ENCODE measurements at regions of chr12 and their contacts with region 1.

Region 1: DNA sequence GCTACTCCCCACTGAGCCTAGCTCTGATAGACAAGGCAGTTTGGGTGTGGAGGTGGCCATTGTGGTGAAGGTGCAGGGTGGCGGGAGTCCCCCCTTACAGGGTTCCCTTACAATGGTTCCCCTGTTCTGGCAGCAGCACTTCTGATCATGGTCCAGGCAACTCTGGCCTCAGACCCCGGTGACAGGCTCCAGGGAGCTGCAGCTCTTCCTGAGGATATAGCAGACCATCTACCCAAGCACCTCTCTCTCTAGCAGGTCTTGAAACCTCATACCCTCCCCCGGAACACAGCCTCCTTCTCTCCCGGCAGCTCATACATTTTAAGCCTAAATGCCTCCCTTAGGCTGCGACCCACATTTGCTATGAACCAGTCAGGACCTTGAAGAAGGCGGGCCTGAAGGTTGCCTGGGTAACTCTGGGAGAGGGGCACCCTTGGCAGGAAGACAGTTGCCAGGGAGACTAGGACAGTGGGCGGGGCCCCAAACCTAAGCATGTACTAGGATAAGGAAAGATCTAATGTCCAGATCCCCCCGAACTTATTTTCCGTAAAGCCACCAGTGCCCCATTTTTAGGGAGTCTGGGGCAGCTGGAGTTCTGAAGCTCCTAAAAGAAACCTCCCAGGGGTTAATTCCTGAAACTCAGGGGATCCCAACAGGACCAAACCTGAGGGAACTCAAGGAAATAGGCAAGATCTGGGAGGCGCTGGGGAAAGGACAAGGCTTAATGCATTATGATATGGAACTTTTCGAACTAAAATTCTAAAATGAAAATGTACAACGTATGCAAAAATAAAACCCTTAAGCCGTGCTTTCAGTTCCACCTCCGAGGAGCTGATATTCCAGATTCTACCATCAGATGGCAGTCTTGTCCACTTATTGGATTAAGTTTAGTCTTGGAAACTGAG is 4.5 kb upstream of the GDF11 start:
- DNase-seq: peak; percentile 97
- H3K4me3 ChIP-seq: peak overlapping the region; percentile 59
- H3K27ac ChIP-seq: peak overlapping the region; percentile 72
- H3K4me1 ChIP-seq: peaks cover 15% of the 10 kb centered on the region
- H3K27me3 ChIP-seq: no peaks in the 10 kb centered on the region
- CTCF ChIP-seq: peak; percentile 90

Region 2: GRCh38 chr12:55659486-55660385 is 78.6 kb before region 1 on chr12:
- CTCF ChIA-PET with region 1: interaction called, 3 read pairs
- POLR2A ChIA-PET with region 1: no interaction called
- intact Hi-C with region 1: loop called (anchors 1 kb)
- DNase-seq: peak; percentile 63
- H3K4me3 ChIP-seq: no peak overlapping the region
- H3K27ac ChIP-seq: no peak overlapping the region
- H3K4me1 ChIP-seq: no peaks in the 10 kb centered on the region
- H3K27me3 ChIP-seq: no peaks in the 10 kb centered on the region
- CTCF ChIP-seq: peak; percentile 63

Region 3: GRCh38 chr12:55797068-55797467 is 58.7 kb after region 1 on chr12:
- CTCF ChIA-PET with region 1: interaction called, 17 read pairs
- POLR2A ChIA-PET with region 1: no interaction called
- intact Hi-C with region 1: loop called (anchors 2 kb)
- DNase-seq: peak; percentile 68
- H3K4me3 ChIP-seq: no peak overlapping the region
- H3K27ac ChIP-seq: no peak overlapping the region
- H3K4me1 ChIP-seq: peaks cover 3% of the 10 kb centered on the region
- H3K27me3 ChIP-seq: no peaks in the 10 kb centered on the region
- CTCF ChIP-seq: peak; percentile 65

Region 4: GRCh38 chr12:55817346-55818139 is 79.2 kb after region 1 on chr12 and contains the starts of genes ORMDL2 and SARNP:
- CTCF ChIA-PET with region 1: interaction called, 13 read pairs
- POLR2A ChIA-PET with region 1: no interaction called
- intact Hi-C with region 1: loop called (anchors 5 kb)
- DNase-seq: peak; percentile 100
- H3K4me3 ChIP-seq: peak within 1 kb of the TSS; percentile 71
- H3K27ac ChIP-seq: peak within 1 kb of the TSS; percentile 75
- H3K4me1 ChIP-seq: peaks cover 17% of the 10 kb centered on the region
- H3K27me3 ChIP-seq: no peaks in the 10 kb centered on the region
- CTCF ChIP-seq: no peak
- total RNA-seq, gene ORMDL2: 32.3 and 35.4 TPM in 2 replicates
- total RNA-seq, gene SARNP: 104 and 115 TPM in 2 replicates

Region 5: GRCh38 chr12:55926738-55927587 is 188.6 kb after region 1 on chr12:
- CTCF ChIA-PET with region 1: interaction called, 3 read pairs
- POLR2A ChIA-PET with region 1: no interaction called
- intact Hi-C with region 1: loop called (anchors 2 kb)
- DNase-seq: peak; percentile 97
- H3K4me3 ChIP-seq: peak overlapping the region; percentile 91
- H3K27ac ChIP-seq: peak overlapping the region; percentile 95
- H3K4me1 ChIP-seq: peaks cover 32% of the 10 kb centered on the region
- H3K27me3 ChIP-seq: no peaks in the 10 kb centered on the region
- CTCF ChIP-seq: peak; percentile 96

Region 6: GRCh38 chr12:55937956-55938355 is 199.6 kb after region 1 on chr12:
- CTCF ChIA-PET with region 1: interaction called, 3 read pairs
- POLR2A ChIA-PET with region 1: no interaction called
- intact Hi-C with region 1: loop called (anchors 2 kb)
- DNase-seq: no peak
- H3K4me3 ChIP-seq: no peak overlapping the region
- H3K27ac ChIP-seq: no peak overlapping the region
- H3K4me1 ChIP-seq: peaks cover 15% of the 10 kb centered on the region
- H3K27me3 ChIP-seq: no peaks in the 10 kb centered on the region
- CTCF ChIP-seq: no peak

Region 7: DNA sequence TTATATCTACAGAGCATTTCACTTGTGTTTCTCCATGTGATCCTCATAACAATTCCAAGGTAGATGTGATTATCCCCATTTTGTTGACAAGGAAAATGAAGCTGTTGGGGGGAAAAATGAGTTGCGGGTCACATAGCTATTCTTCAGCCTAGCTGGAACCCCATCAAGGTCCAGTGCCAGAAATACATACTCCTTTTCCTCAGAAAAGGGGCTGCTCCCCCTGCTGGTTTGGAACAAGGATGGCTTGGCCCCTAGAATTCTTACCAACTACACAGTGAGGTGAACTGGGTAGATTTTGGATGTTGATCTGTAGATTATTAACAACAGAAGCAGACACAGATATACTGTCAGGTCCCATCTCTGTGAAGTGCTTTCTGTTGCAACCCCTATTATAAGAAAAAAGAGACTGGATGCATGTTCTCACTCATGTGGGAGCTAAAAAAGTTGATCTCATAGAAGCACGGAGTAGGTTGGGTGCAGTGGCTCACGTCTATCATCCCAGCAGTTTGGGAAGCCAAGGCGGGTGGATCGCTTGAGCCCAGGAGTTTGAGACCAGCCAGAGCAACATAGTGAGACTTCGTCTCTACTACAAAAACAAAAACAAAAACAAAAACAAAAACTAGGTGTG is 291.4 kb after region 1 on chr12:
- CTCF ChIA-PET with region 1: interaction called, 14 read pairs
- POLR2A ChIA-PET with region 1: no interaction called
- intact Hi-C with region 1: no loop called
- DNase-seq: peak; percentile 73
- H3K4me3 ChIP-seq: no peak overlapping the region
- H3K27ac ChIP-seq: no peak overlapping the region
- H3K4me1 ChIP-seq: no peaks in the 10 kb centered on the region
- H3K27me3 ChIP-seq: no peaks in the 10 kb centered on the region
- CTCF ChIP-seq: peak; percentile 82